PC-9 (cell line): ENCODE measurements at regions of chr5 and their contacts with region 1.

Region 1: DNA sequence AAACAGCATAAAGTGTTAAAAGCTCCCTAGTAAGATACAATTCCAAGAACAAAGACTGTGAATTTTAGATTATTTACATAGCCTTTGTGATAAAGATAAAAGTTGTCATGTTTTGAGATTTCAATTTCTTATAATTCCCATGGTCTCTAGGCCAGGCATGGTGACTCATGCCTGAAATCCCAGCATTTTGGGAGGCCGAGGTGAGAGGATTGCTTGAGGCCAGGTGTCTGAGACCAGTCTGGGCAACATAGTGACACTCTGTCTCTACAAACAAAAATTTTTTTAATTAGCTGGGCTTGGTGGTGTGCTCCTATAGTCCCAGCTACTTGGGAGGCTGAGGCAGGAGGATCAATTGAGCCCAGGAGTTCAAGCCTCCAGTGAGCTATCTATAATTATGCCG is 48.1 kb downstream of the BDP1 start:
- DNase-seq: no peak
- H3K4me3 ChIP-seq: no peak overlapping the region
- H3K27ac ChIP-seq: no peak overlapping the region
- H3K4me1 ChIP-seq: no peaks in the 10 kb centered on the region
- H3K27me3 ChIP-seq: no peaks in the 10 kb centered on the region
- CTCF ChIP-seq: no peak

Region 2: DNA sequence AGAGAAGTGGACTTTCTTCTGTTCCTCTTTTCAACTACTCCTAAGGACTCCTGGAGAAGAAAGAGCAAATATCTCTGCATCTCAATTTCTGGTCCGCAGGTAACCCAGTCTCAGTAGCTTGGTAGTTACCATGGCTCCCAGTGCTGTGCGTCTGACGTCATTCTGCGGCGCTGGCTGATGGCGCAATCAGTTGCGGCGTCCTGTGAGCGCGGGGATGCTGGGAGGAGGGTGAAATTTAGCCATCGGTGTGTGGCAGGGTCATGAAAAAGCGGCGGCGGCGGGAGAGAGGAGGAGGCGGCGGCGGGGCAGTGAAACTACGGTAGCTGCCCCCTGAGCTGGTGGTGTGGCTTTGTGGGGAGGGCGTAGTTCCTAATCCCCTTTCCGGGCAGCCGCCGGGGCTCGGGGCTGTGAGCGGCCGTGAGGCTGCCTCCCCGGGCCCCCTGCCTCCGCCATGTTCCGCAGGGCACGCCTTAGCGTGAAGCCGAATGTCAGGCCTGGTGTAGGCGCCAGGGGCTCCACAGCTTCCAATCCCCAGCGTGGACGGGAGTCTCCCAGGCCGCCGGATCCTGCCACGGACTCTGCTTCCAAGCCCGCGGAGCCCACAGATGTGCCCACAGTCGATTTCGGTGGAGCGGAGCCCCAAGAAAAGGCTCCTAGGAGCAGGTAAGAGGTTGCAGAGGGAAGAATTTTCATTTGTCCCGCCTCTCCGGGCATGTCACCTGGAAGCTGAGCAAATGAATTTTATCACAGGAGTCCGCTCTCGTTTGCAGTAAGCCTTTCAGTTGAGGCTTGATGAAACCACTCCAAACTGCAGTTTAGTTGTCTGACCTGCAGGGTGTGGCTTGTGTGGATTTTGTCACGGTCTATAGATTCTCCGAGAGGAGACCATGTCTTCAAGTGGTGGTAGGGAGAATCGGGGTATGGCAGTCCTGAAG is 47.8 kb before region 1 on chr5 and contains the start of gene BDP1:
- CTCF ChIA-PET with region 1: no interaction called
- POLR2A ChIA-PET with region 1: no interaction called
- intact Hi-C with region 1: no loop called
- DNase-seq: peak; percentile 89 to 93
- H3K4me3 ChIP-seq: peak within 1 kb of the TSS; percentile 71
- H3K27ac ChIP-seq: peak within 1 kb of the TSS; percentile 42
- H3K4me1 ChIP-seq: peaks cover 15% of the 10 kb centered on the region
- H3K27me3 ChIP-seq: no peaks in the 10 kb centered on the region
- CTCF ChIP-seq: peak; percentile 45; the same call in 1 of the 2 replicates
- total RNA-seq, gene BDP1: 12.0 and 20.0 TPM in 2 replicates

Region 3: GRCh38 chr5:71483355-71483754 is 20.2 kb before region 1 on chr5:
- CTCF ChIA-PET with region 1: no interaction called
- POLR2A ChIA-PET with region 1: no interaction called
- intact Hi-C with region 1: no loop called
- DNase-seq: peak in 1 of 2 experiments; percentile 91
- H3K4me3 ChIP-seq: 0 out of 2 replicates have a peak overlapping the region, but pooled peaks have one; percentile 16
- H3K27ac ChIP-seq: peak overlapping the region; percentile 79
- H3K4me1 ChIP-seq: peaks cover 33% of the 10 kb centered on the region
- H3K27me3 ChIP-seq: no peaks in the 10 kb centered on the region
- CTCF ChIP-seq: no peak

Region 4: DNA sequence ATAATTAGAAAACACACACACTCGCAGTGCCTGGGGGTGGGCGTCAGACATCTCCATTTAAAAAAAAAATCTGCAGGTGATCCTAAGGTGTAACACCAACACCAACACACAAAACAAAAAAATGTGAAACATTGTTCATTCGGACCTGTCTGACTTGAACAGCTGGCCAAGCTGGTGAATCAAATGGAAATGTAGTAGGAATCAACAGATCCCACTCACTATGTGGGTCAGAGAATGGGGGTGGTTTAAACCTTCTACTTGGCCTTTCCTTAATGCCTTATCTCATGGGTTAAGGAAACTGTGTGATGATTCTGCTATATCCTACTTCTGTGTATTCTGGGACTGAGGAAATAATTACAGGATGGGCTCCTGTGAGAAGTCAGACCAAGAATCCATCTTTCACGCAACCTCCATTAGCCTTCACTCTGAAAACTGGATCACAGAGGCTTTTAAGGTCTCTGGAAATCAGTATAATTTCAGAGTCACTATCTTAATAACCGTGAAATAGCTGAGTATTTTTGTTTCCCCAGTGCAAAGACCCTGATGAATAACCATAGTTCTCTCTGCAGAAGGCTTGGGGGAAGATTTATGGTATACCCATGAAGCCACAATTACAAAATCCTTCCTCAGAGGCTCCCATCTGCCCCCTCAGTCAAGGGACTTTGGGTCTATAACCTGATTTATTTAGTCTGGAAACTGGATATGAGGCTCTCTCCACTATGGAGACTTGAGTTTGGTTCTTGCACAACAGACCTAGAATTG is 66.4 kb after region 1 on chr5:
- CTCF ChIA-PET with region 1: no interaction called
- POLR2A ChIA-PET with region 1: no interaction called
- intact Hi-C with region 1: no loop called
- DNase-seq: no peak
- H3K4me3 ChIP-seq: no peak overlapping the region
- H3K27ac ChIP-seq: no peak overlapping the region
- H3K4me1 ChIP-seq: no peaks in the 10 kb centered on the region
- H3K27me3 ChIP-seq: no peaks in the 10 kb centered on the region
- CTCF ChIP-seq: no peak

Region 5: DNA sequence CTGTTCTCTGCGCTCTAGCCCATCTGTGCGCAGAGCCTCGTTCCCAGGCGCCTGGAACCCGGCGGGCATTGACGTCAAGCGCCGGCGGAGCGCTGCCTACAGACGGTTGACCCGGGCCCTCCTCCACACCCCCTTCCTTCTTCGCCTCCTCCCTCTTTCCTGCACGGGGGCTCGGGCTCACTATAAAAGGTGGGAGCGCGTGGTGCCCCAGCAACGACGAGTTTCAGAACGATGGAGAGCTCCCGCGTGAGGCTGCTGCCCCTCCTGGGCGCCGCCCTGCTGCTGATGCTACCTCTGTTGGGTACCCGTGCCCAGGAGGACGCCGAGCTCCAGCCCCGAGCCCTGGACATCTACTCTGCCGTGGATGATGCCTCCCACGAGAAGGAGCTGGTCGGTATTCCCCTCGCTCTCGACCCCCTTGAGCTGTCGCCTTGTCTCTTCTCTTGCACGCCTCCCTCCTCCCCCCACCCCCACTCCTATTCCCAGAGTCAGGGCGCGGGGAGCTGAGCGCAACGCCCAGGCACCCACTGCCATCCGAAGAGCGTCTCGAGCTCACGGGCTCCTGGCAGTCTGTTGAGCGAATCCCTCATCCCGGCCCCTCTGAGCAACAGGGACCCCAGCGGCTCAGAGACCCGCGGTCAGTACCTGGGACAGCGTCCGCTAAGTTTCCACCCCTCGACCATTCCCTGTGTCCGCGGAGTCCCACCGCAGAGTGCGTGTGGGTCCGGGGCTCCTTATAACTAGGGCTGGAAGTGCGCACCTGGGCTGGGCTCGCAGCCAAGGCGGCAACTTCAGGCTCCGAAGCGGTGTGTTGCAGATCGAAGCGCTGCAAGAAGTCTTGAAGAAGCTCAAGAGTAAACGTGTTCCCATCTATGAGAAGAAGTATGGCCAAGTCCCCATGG is 215.8 kb after region 1 on chr5 and contains the start of gene CARTPT:
- CTCF ChIA-PET with region 1: interaction called, 18 read pairs
- POLR2A ChIA-PET with region 1: no interaction called
- intact Hi-C with region 1: no loop called
- DNase-seq: no peak
- H3K4me3 ChIP-seq: no peak within 1 kb of the TSS
- H3K27ac ChIP-seq: no peak within 1 kb of the TSS
- H3K4me1 ChIP-seq: no peaks in the 10 kb centered on the region
- H3K27me3 ChIP-seq: peaks cover 38% of the 10 kb centered on the region
- CTCF ChIP-seq: no peak
- total RNA-seq, gene CARTPT: not detected in 2 replicates